HepG2 (cell line): ENCODE measurements at regions of chr13 and their contacts with region 1.

Region 1: GRCh38 chr13:76307142-76307541 is 579.1 kb downstream of the KCTD12 start:
- DNase-seq: no peak
- ATAC-seq: no peak
- H3K4me3 ChIP-seq: no peak overlapping the region
- H3K27ac ChIP-seq: no peak overlapping the region
- H3K4me1 ChIP-seq: no peaks in the 10 kb centered on the region
- H3K27me3 ChIP-seq: peaks cover 0 to 2% of the 10 kb centered on the region in 2 experiments; a peak in 1 of 5 replicates
- CTCF ChIP-seq: no peak
- EP300 ChIP-seq: no peak
- POLR2A ChIP-seq: no peak
- RAD21 ChIP-seq: no peak

Region 2: GRCh38 chr13:74987124-74987690 is 1319.9 kb before region 1 on chr13:
- CTCF ChIA-PET with region 1: no interaction called
- POLR2A ChIA-PET with region 1: no interaction called
- in situ Hi-C with region 1: no loop called
- intact Hi-C with region 1: no loop called
- DNase-seq: no peak
- ATAC-seq: no peak
- H3K4me3 ChIP-seq: no peak overlapping the region
- H3K27ac ChIP-seq: no peak overlapping the region
- H3K4me1 ChIP-seq: no peaks in the 10 kb centered on the region
- H3K27me3 ChIP-seq: no peaks in the 10 kb centered on the region
- CTCF ChIP-seq: no peak
- EP300 ChIP-seq: no peak
- POLR2A ChIP-seq: no peak
- RAD21 ChIP-seq: no peak

Region 3: DNA sequence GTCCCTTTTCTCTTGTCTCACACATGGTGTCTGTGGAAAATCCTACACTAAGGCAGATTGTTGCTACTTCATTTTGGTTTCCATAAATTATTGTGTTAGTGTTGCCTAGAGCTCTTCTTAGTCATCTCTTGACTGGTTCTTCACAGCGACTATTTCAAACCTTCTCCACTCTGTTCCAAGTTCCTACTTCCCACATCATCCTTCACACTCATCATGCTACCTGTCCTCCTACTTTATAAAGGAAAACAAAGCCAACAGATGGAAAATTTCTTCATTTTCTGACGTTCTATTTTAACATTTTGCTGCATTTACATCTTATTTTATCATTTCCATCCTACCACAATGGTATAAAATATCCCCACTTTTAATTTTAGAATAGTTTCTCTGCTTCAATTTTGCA is 56.9 kb before region 1 on chr13:
- CTCF ChIA-PET with region 1: no interaction called
- POLR2A ChIA-PET with region 1: no interaction called
- in situ Hi-C with region 1: no loop called
- intact Hi-C with region 1: loop called (anchors 2 kb)
- DNase-seq: no peak
- ATAC-seq: no peak
- H3K4me3 ChIP-seq: no peak overlapping the region
- H3K27ac ChIP-seq: no peak overlapping the region
- H3K4me1 ChIP-seq: no peaks in the 10 kb centered on the region
- H3K27me3 ChIP-seq: no peaks in the 10 kb centered on the region
- CTCF ChIP-seq: no peak
- EP300 ChIP-seq: no peak
- POLR2A ChIP-seq: no peak
- RAD21 ChIP-seq: no peak

Region 4: DNA sequence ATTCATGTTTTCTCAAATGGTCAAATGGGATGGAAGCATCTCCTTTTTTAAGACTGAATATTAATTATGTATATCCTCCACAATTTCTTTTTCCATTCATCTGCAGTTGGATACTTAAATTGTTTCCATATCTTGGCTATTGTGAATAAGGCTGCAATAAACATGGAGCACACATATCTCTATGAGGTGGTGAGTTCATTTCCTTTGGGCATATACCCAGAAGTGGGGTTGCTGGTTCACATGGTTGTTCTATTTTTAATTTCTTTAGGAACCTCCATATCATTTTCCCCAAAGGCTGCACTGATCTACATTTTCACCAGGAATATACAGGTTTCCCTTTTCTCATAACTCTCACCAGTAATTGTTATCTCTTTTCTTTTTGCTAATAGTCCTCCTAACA is 12.8 kb after region 1 on chr13:
- CTCF ChIA-PET with region 1: no interaction called
- POLR2A ChIA-PET with region 1: no interaction called
- in situ Hi-C with region 1: no loop called
- intact Hi-C with region 1: no loop called
- DNase-seq: no peak
- ATAC-seq: no peak
- H3K4me3 ChIP-seq: no peak overlapping the region
- H3K27ac ChIP-seq: no peak overlapping the region
- H3K4me1 ChIP-seq: no peaks in the 10 kb centered on the region
- H3K27me3 ChIP-seq: no peaks in the 10 kb centered on the region
- CTCF ChIP-seq: no peak
- EP300 ChIP-seq: no peak
- POLR2A ChIP-seq: no peak
- RAD21 ChIP-seq: no peak